Motor neuron (in vitro differentiated cells): ENCODE measurements at regions of chr17 and their contacts with region 1.

Region 1: DNA sequence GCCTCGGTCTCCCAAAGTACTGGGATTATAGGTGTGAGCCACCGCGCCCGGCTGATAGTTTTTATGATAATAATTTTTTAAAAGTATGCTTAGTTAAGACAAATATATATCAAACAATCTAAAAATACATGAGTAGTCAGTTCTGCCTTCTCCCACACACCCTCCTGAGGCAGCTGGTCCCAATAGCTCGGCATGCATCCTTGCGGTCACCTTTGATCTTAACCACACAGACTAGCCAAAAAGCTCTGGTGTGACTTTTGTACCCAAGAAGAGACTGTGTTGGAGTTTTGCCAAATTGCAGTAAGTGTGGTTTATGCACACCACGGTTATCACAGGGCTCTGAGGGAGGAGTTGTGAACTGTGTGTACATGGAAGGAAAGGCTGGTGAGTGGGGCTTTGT is 25.6 kb downstream of the ATP6V0A1 start:
- ATAC-seq: no peak
- H3K4me3 ChIP-seq: no peak overlapping the region
- H3K27ac ChIP-seq: no peak overlapping the region
- H3K4me1 ChIP-seq: no peaks in the 10 kb centered on the region

Region 2: DNA sequence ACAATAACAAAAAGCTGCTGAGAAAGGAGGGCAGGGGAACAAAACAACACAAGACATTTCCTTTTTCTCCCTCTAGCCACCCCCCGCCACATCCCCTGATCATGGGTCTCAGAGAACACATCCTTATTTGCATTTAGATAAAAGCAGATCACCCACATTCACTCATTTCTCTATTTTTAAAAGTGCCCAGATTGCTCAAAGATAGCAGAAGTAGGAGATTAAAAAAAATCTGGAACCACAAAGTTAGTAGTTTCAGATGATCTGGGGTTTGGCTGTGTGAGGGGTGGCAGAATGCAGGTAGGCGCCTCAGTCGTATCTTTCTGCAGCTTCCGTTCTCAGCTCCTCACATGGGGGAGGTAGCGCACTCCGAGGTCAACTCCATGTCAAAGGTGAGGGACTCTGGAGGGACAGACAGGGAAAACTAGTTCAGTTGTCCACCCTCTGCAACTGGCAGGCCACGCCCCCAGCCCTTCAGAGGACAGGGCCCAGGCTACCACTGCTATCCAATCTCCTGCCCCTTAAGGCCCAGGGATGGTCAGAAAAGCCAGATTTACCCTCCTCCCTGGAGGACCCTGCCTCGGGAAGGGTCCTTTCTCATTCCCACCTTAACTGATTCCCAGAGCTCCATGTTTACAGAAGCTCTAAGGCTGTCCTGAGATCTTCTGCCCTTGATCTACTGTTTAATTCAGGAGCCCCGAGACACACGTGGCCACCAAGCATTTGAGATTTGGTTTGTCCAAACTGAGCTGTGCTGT is 168.7 kb before region 1 on chr17:
- in situ Hi-C with region 1: no loop called
- ATAC-seq: no peak
- H3K4me3 ChIP-seq: no peak overlapping the region
- H3K27ac ChIP-seq: no peak overlapping the region
- H3K4me1 ChIP-seq: peaks cover 23% of the 10 kb centered on the region in 2 donors

Region 3: DNA sequence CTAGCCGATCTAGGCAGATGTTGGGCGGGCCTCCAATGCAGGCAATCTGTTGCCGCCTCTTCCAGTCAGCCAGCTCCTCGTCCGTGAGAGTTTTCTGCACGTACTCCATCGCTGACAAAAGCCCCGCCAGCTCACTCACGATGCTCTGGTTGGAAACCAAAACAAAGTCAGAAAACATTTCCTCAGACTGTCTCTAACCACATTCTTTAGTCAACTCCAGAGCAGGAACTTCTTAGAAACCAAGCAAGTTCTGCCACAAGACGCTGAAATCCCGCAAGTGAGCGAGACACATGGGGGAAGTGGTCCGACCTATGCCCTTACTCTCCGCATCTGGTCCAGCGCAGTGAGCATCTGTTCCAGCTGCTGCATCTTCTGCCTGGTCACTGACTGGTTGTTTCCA is 146.9 kb before region 1 on chr17:
- in situ Hi-C with region 1: loop called in 1 of 9 experiments (anchors 25 kb)
- ATAC-seq: peak in 2 of 8 experiments; percentile 85 to 91
- H3K4me3 ChIP-seq: no peak overlapping the region
- H3K27ac ChIP-seq: no peak overlapping the region
- H3K4me1 ChIP-seq: no peaks in the 10 kb centered on the region

Region 4: GRCh38 chr17:42577532-42578281 is 93.4 kb after region 1 on chr17 and contains the start of gene PSMC3IP:
- in situ Hi-C with region 1: loop called in 1 of 9 experiments (anchors 25 kb)
- ATAC-seq: peak; percentile 88 to 93 (median 90)
- H3K4me3 ChIP-seq: peak within 1 kb of the TSS; percentile 58 to 74 (median 65)
- H3K27ac ChIP-seq: peak within 1 kb of the TSS in 1 of 2 donors; percentile 11
- H3K4me1 ChIP-seq: peaks cover 7 to 8% of the 10 kb centered on the region in 2 donors
- total RNA-seq, gene PSMC3IP: 1.5 to 24.7 (median 12.1) TPM